ENCODE measurements at regions of chr19 and their contacts with region 1.

Region 1: DNA sequence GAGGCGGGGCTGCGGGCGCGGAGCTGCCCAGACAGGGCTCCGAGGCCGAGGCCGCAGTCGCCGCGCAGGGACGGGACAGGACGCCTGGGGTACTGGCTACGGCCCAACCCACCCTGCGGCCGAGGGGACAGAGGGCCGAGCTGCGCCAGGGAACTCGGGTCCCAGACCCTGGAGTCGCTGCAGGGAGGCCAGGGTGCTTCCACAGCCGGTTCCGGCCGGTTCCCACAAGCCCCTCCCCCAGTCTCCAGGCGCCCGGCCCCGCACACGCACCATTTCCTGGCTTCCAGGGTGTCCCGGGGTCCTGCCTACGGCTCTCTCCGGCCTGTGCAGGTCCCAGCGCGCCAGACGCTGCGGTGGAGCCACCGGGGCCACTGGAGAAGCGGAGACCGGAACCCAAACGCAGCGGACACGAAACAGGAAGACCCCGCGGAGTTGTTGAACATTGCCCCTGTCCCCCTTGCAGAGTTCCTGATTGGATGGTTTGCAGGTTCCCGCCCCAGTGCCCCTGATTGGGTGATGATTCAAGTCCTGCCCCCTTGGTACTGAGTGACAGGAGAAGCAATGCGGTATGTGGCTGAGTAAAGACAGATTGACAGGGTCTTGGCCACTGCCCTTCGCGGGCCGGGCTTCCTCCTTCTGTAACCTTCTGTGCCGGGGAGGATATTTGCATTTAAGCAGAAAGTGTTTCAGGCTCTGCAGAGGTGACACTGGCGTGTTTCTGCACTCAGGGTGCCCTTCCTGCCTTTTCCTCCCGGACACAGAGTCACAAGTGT is at the start of gene ZNF564:
- DNase-seq: peak; percentile 96
- ATAC-seq: peak; percentile 98
- H3K4me3 ChIP-seq: peak within 1 kb of the TSS; percentile 81 to 95 (median 86)
- H3K4me3 Mint-ChIP-seq: peak within 1 kb of the TSS; percentile 100
- H3K27ac ChIP-seq: peak within 1 kb of the TSS; percentile 70 to 87
- H3K27ac Mint-ChIP-seq: peak within 1 kb of the TSS; percentile 94
- H3K4me1 ChIP-seq: peaks cover 20 to 29% of the 10 kb centered on the region in 2 donors
- H3K4me1 Mint-ChIP-seq: peaks cover 45% of the 10 kb centered on the region
- H3K27me3 ChIP-seq: no peaks in the 10 kb centered on the region
- H3K27me3 Mint-ChIP-seq: no peaks in the 10 kb centered on the region
- CTCF ChIP-seq: no peak
- total RNA-seq, gene ZNF564: 31.8 and 35.8 TPM in 2 replicates

Region 2: GRCh38 chr19:11964858-11965645 is 586.2 kb before region 1 on chr19 and contains the start of gene ZNF763:
- CTCF ChIA-PET with region 1: no interaction called
- POLR2A ChIA-PET with region 1: no interaction called
- intact Hi-C with region 1: loop called (anchors 5 kb)
- DNase-seq: peak; percentile 95
- ATAC-seq: peak; percentile 91
- H3K4me3 ChIP-seq: peak within 1 kb of the TSS; percentile 76 to 97 (median 89)
- H3K4me3 Mint-ChIP-seq: peak within 1 kb of the TSS; percentile 99
- H3K27ac ChIP-seq: peak within 1 kb of the TSS; percentile 99
- H3K27ac Mint-ChIP-seq: peak within 1 kb of the TSS; percentile 99
- H3K4me1 ChIP-seq: peaks cover 14 to 20% of the 10 kb centered on the region in 2 donors
- H3K4me1 Mint-ChIP-seq: peaks cover 27% of the 10 kb centered on the region
- H3K27me3 ChIP-seq: no peaks in the 10 kb centered on the region
- H3K27me3 Mint-ChIP-seq: no peaks in the 10 kb centered on the region
- CTCF ChIP-seq: no peak
- total RNA-seq, gene ZNF763: 14.2 and 16.6 TPM in 2 replicates

Region 3: DNA sequence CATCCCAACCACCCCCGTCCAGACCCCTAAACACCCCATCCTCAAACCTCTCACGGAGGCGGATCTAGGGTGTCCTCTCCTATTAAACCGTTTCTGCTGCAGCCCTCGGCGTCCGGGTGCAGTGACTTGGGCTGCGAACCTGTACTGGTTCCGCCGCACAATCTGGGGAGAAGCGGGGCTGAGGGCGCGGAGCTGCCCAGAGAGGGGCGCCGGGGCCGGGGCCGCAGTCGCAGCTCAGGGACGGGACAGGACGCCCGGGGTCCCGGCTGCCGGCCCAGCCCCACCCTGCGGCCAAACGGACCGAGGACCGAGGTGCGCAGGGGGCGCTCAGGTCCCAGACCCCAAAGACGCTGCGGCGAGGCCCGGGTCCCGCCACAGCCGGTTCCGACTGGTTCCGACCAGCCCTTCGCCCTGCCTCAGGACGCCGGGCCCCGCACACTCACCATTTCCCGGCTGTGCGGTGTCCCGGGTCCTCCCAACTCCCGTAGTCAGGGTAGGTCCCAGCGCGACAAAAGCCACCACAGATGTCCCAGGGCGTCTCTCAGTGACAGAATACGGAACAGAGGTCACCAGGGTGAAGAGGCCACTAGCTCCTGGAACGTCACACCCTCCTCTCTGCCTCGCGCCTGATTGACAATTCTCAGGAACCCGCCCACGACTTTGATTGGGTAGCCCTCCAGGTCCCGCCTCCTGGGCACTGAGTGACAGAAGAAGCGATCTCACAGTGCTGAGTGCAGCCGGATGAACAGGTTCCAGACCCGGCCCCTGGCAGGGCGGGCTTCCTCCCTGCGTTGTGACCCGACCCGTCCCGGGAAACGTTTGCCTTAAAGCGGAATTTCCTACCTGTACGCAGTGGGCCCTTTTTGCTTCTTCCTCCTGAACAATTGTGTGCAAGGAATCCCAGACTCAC is 256.7 kb before region 1 on chr19 and contains the start of gene ZNF44:
- CTCF ChIA-PET with region 1: interaction called, 3 read pairs
- POLR2A ChIA-PET with region 1: no interaction called
- intact Hi-C with region 1: loop called (anchors 1 kb)
- DNase-seq: peak; percentile 95
- ATAC-seq: peak; percentile 96
- H3K4me3 ChIP-seq: peak within 1 kb of the TSS; percentile 57 to 96 (median 91)
- H3K4me3 Mint-ChIP-seq: peak within 1 kb of the TSS; percentile 99
- H3K27ac ChIP-seq: peak within 1 kb of the TSS; percentile 82 to 89
- H3K27ac Mint-ChIP-seq: peak within 1 kb of the TSS; percentile 94
- H3K4me1 ChIP-seq: peaks cover 8 to 17% of the 10 kb centered on the region in 2 donors
- H3K4me1 Mint-ChIP-seq: peaks cover 31% of the 10 kb centered on the region
- H3K27me3 ChIP-seq: no peaks in the 10 kb centered on the region
- H3K27me3 Mint-ChIP-seq: no peaks in the 10 kb centered on the region
- CTCF ChIP-seq: no peak
- total RNA-seq, gene ZNF44: 27.8 and 28.0 TPM in 2 replicates

Region 4: DNA sequence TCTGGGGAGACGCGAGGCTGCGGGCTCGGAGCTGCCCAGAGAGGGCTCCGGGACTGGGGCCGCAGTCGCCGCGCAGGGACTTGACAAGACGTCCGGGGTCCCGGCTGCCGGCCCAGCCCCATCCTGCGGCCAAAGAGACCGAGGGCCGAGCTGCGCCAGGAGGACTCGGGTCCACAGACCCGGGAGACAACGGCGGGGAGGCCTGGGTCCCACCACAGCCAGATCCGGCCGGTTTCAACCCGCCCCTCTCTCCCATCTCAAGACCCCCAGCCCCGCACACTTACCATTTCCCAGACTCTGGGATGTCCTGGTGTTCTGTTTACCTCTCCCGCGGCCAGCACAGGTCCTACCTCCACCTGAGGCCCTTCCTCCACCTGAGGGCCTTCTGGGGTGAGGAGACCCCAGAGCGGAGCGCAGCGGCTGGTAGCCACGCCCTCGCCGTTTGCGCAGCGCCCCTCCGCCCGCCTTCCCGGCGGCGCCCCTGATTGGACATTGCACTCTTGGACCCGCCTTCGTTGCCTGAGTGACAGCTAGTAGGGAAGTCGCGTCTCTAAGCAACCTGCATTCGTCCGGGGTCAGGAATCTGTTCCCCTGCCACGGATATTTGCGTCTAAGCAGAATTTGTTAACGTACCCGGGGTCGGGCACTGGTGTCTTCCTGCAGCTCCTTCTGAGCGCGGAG is 66.7 kb before region 1 on chr19 and contains the start of gene ZNF709:
- CTCF ChIA-PET with region 1: no interaction called
- POLR2A ChIA-PET with region 1: no interaction called
- intact Hi-C with region 1: loop called (anchors 1 kb)
- DNase-seq: peak; percentile 93
- ATAC-seq: peak; percentile 96
- H3K4me3 ChIP-seq: peak within 1 kb of the TSS; percentile 81 to 98 (median 92)
- H3K4me3 Mint-ChIP-seq: peak within 1 kb of the TSS; percentile 91
- H3K27ac ChIP-seq: peak within 1 kb of the TSS; percentile 69 to 84
- H3K27ac Mint-ChIP-seq: peak within 1 kb of the TSS; percentile 89
- H3K4me1 ChIP-seq: peaks cover 30 to 39% of the 10 kb centered on the region in 2 donors
- H3K4me1 Mint-ChIP-seq: peaks cover 34% of the 10 kb centered on the region
- H3K27me3 ChIP-seq: no peaks in the 10 kb centered on the region
- H3K27me3 Mint-ChIP-seq: no peaks in the 10 kb centered on the region
- CTCF ChIP-seq: no peak
- total RNA-seq, gene ZNF709: 8.4 and 9.3 TPM in 2 replicates

Region 5: GRCh38 chr19:12574036-12574435 is 22.8 kb after region 1 on chr19:
- CTCF ChIA-PET with region 1: no interaction called
- POLR2A ChIA-PET with region 1: no interaction called
- intact Hi-C with region 1: loop called (anchors 1 kb)
- DNase-seq: peak; percentile 85
- ATAC-seq: peak; percentile 94
- H3K4me3 ChIP-seq: peak overlapping the region in 2 of 5 experiments; percentile 17 to 21
- H3K4me3 Mint-ChIP-seq: peak overlapping the region; percentile 61
- H3K27ac ChIP-seq: peak overlapping the region; percentile 77 to 85
- H3K27ac Mint-ChIP-seq: peak overlapping the region; percentile 88
- H3K4me1 ChIP-seq: peaks cover 31 to 43% of the 10 kb centered on the region in 2 donors
- H3K4me1 Mint-ChIP-seq: peaks cover 35% of the 10 kb centered on the region
- H3K27me3 ChIP-seq: no peaks in the 10 kb centered on the region
- H3K27me3 Mint-ChIP-seq: no peaks in the 10 kb centered on the region
- CTCF ChIP-seq: no peak